ENCODE measurements at regions of chr4 and their contacts with region 1.

Region 1: GRCh38 chr4:167290678-167291077 is 56.4 kb upstream of the SPOCK3 start:
- DNase-seq: no peak
- ATAC-seq: no peak

Region 2: GRCh38 chr4:167021545-167022155 is 269.0 kb before region 1 on chr4:
- intact Hi-C with region 1: loop called (anchors 5 kb)
- DNase-seq: peak; percentile 77
- ATAC-seq: peak; percentile 89

Region 3: DNA sequence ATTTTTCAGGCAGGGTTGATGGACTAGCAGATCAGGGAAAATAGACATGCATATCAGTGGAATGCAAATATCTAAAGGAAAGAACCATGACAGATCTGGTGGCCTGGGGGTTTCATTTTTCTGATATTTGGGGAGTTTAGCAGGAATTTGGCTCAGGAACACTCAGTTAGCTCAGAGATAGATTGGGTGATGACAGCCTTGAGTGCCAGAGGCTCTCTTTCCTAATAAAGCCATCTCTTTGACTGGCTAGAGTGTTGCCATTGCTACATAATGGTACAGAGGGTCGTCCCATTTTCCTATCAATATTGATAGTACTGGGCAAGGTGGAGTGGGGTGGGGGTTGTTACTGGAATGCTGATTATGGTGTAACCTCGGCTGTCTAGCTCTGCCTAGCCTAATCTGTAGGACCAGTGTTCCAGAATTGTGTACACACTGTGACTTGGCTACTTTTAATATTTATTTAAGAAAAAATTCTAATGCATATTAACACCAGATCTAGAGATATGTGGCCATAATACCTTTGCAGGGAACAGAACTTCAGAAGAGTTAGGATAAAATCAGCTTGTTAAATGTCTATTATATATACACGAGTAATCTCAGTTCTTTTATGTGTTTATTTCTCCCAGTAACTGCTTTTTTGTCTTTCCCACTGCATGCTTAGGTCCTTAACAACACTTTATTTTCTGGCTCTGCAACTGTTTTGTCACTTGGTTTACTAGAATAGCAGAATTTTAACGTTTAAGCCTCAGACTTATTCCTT is 88.6 kb after region 1 on chr4:
- intact Hi-C with region 1: no loop called
- DNase-seq: no peak
- ATAC-seq: no peak

Measured in Right ventricle myocardium superior (tissue), 1 donor.